ENCODE measurements at regions of chr16 and their contacts with region 1.

Region 1: DNA sequence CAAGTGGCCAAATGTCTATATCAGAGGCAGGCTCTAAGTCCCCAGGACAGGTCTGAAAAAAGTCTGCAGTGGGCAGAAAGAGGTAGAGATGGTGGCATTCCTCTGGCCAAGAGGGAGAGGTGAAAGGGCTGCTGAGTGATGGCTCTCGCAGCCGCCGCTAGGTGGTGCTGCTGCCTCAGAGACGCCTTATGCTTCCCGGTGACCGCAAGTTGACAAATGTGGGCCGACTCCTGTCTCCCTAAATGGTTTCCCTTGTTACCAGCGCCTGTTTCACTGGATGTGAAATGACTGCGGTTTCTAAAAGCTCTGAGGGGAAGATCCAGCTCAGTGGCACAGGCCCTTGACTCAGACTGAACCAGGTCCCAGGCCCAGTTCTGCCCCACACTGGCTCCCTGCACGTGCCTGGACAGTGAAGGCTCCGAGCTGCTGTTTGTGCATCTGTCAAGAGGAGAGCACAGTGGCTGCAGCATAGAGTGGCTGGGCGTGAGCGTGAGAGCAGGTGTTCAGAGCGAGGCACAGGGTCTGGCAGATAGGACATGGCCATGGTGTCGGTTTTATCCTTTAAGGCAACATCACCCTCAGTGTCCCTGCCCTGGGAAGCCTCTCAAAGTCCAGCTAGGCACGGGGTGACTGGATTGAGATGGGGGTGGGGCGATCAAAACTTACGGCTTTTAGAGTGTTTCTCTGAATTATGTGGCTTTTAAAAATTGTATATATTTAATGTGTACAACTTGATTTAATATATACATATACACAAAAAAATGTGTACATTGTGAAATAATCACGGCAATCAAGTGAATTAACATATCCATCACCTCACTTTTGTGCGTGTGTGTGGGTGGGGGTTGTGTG is 19.9 kb downstream of the CLEC16A start:
- DNase-seq: peak; percentile 89
- ATAC-seq: peak; percentile 63
- H3K4me3 Mint-ChIP-seq: peak overlapping the region; percentile 53
- H3K27ac Mint-ChIP-seq: peak overlapping the region; percentile 91
- H3K4me1 Mint-ChIP-seq: peaks cover 80% of the 10 kb centered on the region
- H3K27me3 Mint-ChIP-seq: no peaks in the 10 kb centered on the region

Region 2: DNA sequence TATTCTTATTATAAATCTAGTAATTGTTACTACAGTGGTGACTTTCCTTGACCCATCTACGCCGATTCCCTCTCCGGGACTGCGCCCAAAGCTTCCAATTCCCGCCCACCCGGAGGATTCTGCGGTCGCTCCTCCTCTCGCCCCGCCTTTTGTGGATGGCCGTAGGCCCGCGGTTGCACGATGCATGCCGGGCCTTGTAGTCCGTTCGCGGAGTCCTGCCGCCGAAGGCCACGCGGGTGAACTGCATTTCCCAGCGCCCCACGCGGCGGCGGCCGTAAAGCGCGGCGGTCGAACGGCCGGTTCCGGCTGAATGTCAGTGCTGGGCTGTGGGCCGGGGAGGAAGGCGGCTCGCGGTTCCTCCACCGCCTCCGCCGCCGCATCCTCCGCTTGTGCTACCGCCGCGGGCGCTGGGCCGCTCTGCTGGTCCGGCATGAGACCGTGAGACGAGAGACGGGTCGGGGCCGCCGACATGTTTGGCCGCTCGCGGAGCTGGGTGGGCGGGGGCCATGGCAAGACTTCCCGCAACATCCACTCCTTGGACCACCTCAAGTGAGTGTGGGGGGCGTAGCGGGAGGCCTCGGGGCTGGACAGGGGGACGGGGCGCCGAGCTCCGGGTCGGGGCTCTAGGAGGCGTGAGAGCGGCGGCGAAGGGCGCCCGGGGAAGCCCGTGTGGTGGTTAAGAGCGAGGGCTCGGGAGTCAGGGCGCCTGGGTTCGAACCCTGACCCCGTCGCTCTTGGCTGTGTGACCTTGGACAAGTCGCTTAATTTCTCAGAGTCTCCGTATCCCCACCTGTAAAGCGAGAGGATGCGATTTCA is 19.8 kb before region 1 on chr16 and contains the start of gene CLEC16A:
- CTCF ChIA-PET with region 1: interaction called, 29 read pairs
- DNase-seq: peak; percentile 98
- ATAC-seq: peak; percentile 72
- H3K4me3 Mint-ChIP-seq: peak within 1 kb of the TSS; percentile 90
- H3K27ac Mint-ChIP-seq: peak within 1 kb of the TSS; percentile 83
- H3K4me1 Mint-ChIP-seq: peaks cover 60% of the 10 kb centered on the region
- H3K27me3 Mint-ChIP-seq: no peaks in the 10 kb centered on the region
- total RNA-seq, gene CLEC16A: 36.5 to 55.9 TPM

Region 3: DNA sequence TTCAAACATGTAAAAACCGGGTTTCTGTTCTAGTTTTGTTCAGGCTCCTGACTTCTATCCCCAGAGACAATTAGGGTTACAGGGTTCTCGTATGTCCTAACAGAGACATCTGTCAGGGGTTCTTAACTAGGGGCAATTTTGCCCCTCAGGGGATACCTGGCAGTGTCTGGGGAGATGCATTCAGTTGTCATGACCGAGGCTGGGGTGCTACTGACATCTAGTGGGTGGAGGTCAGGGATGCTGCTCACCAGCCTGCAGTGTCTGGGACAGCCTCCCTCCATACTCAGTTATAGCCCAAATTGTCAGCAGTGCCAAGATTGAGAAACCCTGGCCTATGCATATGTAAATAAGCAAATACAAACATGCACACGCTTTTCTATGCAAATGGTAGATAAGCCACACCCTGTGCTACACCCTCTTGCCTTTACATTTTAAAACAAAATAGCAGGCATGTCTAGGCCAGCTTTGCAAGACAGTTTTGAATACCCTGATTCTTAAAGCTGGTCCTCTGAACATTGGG is 17.5 kb after region 1 on chr16:
- CTCF ChIA-PET with region 1: interaction called, 45 read pairs
- DNase-seq: peak; percentile 87
- ATAC-seq: peak; percentile 89
- H3K4me3 Mint-ChIP-seq: peak overlapping the region; percentile 58
- H3K27ac Mint-ChIP-seq: peak overlapping the region; percentile 81
- H3K4me1 Mint-ChIP-seq: peaks cover 85% of the 10 kb centered on the region
- H3K27me3 Mint-ChIP-seq: no peaks in the 10 kb centered on the region

Region 4: DNA sequence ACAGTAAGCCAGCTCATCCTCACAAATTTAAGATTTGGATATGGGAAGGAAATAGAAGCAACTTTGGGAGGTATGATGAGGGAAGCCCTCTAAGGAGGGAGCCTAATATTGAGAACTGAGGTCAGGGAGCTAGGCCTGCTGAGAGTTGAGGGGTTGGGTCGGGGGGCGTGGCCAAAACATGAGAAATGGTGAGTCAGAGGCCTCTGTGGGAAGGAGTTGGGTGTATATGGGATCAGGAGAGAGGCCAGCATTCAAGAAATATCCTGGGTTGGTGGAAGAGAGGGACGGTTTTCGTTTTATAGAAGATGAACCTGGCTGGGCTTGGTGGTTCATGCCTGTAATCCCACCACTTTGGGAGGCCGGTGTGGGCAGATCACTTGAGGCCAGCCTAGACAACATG is 28.5 kb after region 1 on chr16:
- CTCF ChIA-PET with region 1: no interaction called
- DNase-seq: peak; percentile 64
- ATAC-seq: no peak
- H3K4me3 Mint-ChIP-seq: no peak overlapping the region
- H3K27ac Mint-ChIP-seq: peak overlapping the region; percentile 69
- H3K4me1 Mint-ChIP-seq: peaks cover 86% of the 10 kb centered on the region
- H3K27me3 Mint-ChIP-seq: no peaks in the 10 kb centered on the region

Region 5: GRCh38 chr16:11094072-11094856 is 130.0 kb after region 1 on chr16:
- CTCF ChIA-PET with region 1: interaction called, 11 read pairs
- DNase-seq: peak; percentile 88
- ATAC-seq: peak; percentile 85
- H3K4me3 Mint-ChIP-seq: peak overlapping the region; percentile 25
- H3K27ac Mint-ChIP-seq: peak overlapping the region; percentile 93
- H3K4me1 Mint-ChIP-seq: peaks cover 90% of the 10 kb centered on the region
- H3K27me3 Mint-ChIP-seq: no peaks in the 10 kb centered on the region

Region 6: GRCh38 chr16:11370084-11370931 is 406.0 kb after region 1 on chr16:
- CTCF ChIA-PET with region 1: interaction called, 28 read pairs
- DNase-seq: no peak
- ATAC-seq: no peak
- H3K4me3 Mint-ChIP-seq: no peak overlapping the region
- H3K27ac Mint-ChIP-seq: no peak overlapping the region
- H3K4me1 Mint-ChIP-seq: peaks cover 6% of the 10 kb centered on the region
- H3K27me3 Mint-ChIP-seq: peaks cover 21% of the 10 kb centered on the region

Region 7: DNA sequence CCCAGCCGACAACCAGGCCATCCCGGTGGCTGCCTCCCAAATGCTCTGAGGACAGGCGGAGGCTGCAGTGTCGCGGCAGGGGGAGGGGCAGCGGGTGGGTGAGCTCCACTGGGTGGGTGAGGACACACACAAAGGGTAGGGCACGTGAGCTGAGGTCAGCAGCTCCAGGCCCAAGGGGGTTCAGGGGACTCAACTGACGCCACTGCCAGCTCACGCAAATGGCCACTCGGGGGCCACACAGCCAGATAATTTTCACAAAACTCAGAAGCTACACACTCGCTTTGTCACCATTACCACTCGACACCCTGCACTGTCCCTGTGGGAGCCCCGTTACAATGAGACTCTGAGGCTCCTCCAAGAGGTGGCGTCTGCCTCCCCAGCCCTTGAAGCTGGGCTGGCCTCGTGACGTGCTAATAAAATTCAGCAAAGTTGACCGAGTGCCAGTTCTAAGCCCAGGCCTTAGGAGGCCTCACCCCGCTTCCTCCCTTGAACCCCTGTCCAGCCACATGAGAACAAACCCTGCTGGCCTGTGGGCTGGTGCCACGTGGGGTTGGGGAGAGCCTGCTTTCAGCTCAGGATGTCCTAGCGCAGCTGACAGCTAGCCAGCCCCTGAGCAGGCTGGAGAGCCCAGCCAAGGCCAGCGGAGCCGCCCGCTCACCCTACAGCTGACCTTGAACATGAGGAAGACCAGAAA is 437.9 kb after region 1 on chr16:
- CTCF ChIA-PET with region 1: interaction called, 72 read pairs
- DNase-seq: no peak
- ATAC-seq: no peak
- H3K4me3 Mint-ChIP-seq: no peak overlapping the region
- H3K27ac Mint-ChIP-seq: no peak overlapping the region
- H3K4me1 Mint-ChIP-seq: no peaks in the 10 kb centered on the region
- H3K27me3 Mint-ChIP-seq: peaks cover 6% of the 10 kb centered on the region

Region 8: GRCh38 chr16:11530171-11530940 is 566.1 kb after region 1 on chr16:
- CTCF ChIA-PET with region 1: interaction called, 20 read pairs
- DNase-seq: no peak
- ATAC-seq: no peak
- H3K4me3 Mint-ChIP-seq: no peak overlapping the region
- H3K27ac Mint-ChIP-seq: no peak overlapping the region
- H3K4me1 Mint-ChIP-seq: peaks cover 4% of the 10 kb centered on the region
- H3K27me3 Mint-ChIP-seq: peaks cover 14% of the 10 kb centered on the region